ENCODE measurements at regions of chr19 and their contacts with region 1.

Region 1: GRCh38 chr19:36489118-36489919 is at the start of gene ZNF566:
- DNase-seq: peak; percentile 94
- ATAC-seq: peak; percentile 99
- H3K4me3 ChIP-seq: peak within 1 kb of the TSS; percentile 77 to 84
- H3K27ac ChIP-seq: peak within 1 kb of the TSS in 1 of 2 donors; percentile 67
- H3K4me1 ChIP-seq: no peaks in the 10 kb centered on the region
- H3K27me3 ChIP-seq: no peaks in the 10 kb centered on the region
- total RNA-seq, gene ZNF566: 13.6 to 16.5 TPM

Region 2: DNA sequence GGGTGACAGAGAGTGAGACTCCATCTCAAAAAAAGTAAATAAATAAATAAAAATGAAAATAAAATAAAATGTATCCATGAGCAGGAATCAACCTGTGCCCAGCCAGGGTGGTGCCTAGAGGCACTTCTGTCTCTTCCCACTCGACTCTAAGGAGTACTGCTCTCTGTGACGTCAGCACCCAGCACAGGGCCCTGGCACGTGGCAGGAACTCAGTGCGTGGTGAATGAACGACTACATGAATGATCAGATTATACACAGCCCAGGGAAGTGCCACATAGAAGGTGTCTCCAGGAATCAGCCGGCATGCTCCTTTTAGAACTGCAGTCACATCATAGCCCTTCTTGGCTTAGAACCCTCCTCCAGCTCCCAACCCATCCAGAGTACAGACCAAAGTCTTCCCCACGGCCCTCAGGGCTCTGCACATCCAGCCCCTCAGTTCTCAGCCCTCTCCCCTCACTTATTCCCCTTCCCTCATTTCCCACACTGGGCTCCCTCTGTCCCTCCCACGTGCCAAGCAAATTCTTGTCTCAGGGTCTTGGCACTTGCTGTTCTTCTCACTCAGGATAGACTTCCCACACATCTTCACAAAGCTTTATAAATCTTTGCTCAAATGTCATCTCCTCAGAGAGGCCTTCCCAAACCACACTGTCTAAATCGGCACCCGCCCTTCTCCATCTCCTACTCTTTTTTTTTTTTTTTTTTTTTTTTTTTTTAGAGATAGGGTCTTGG is 460.8 kb before region 1 on chr19:
- intact Hi-C with region 1: no loop called
- DNase-seq: no peak
- ATAC-seq: no peak
- H3K4me3 ChIP-seq: no peak overlapping the region
- H3K27ac ChIP-seq: no peak overlapping the region
- H3K4me1 ChIP-seq: no peaks in the 10 kb centered on the region
- H3K27me3 ChIP-seq: no peaks in the 10 kb centered on the region

Region 3: DNA sequence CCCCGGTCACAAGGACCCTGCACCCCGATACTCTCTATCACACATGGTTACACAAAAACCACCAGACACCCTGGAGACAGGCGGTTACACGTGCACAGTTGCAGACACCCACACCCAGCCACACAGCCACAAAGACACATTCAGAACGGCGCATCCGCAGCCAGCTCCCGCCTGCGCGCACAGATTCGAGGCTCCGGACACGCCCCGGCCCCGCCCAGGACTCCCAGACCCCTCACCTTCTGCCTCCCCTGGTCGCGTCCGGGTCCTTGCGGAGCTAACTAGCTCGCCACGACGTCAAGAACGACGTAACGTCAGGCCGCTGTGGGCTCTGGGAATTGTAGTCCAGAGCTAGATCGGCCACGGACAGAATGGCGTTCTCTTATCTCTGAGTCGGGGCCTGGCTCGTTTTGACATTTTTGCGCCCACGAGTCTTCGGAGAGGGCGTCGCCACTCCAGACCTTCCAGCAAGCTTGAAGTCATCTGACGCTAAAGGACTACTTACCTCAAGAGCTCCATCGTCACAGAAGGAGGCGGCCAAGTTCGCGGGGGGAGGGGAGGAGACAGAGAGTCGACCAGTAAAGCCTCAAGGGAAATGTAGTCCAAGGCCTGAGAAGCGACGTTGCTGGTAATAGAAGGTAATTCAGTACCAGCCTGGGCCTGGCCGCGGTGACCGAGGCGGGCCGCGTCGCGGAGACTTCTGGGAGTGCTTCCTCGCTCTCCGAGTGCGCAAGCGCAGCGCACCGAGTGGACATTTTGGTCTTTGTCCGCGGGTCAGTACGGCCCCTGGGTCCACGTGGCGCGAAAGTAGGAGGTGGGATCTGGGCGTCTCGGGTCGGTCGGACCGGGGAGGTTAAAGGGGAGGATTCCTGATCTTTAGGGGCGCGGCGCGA is 274.7 kb before region 1 on chr19 and contains the starts of genes ZNF146 and ZNF565:
- intact Hi-C with region 1: loop called in 1 of 2 experiments (anchors 10 kb)
- DNase-seq: peak; percentile 99
- ATAC-seq: peak; percentile 99
- H3K4me3 ChIP-seq: peak within 1 kb of the TSS; percentile 74 to 97
- H3K27ac ChIP-seq: peak within 1 kb of the TSS in 1 of 2 donors; percentile 37
- H3K4me1 ChIP-seq: no peaks in the 10 kb centered on the region
- H3K27me3 ChIP-seq: no peaks in the 10 kb centered on the region
- total RNA-seq, gene ZNF146: 44.3 to 44.8 TPM
- total RNA-seq, gene ZNF565: 7.4 to 8.0 TPM

Region 4: DNA sequence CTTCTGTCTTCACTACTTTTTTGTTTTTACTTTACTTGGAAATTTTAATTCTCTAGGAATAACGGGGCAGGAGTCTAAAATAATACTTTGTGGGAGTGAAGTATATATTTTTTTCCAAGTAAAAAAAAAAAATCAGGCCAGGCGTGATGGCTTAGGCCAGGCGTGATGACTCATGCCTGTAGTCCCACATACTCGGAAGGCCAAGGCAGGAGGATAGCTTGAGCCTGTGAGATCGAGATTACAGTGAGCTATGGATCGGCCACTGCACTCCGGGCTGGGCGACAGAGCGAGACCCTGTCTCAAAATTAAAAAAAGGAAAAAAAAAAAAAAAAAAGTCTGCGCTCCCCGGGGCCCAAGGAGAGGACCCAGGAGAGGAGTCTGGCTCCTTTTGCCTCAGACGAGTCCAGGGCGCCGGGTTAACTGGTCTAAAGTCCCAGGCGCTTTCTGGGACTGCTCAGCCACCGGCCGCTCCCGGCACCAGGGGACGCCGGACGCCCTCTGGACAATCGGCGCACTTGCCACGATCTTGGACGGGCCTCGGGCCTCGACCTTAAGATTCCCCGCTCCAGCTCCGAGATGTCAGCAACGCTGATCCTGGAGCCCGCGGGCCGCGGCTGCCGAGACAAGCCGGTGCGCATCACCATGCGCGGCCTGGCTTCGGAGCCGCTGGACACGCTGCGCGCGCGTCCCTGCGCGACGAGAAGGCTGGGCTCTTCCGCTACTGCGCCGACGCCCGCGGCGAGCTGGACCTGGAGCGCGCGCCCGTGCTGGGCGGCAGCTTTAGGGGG is 68.2 kb before region 1 on chr19:
- intact Hi-C with region 1: loop called in 1 of 2 experiments (anchors 5 kb)
- DNase-seq: peak; percentile 51 to 75
- ATAC-seq: peak; percentile 57
- H3K4me3 ChIP-seq: peak overlapping the region; percentile 19 to 31
- H3K27ac ChIP-seq: no peak overlapping the region
- H3K4me1 ChIP-seq: no peaks in the 10 kb centered on the region
- H3K27me3 ChIP-seq: no peaks in the 10 kb centered on the region

Region 5: GRCh38 chr19:36449059-36449670 is 40.2 kb before region 1 on chr19:
- intact Hi-C with region 1: no loop called
- DNase-seq: no peak
- ATAC-seq: no peak
- H3K4me3 ChIP-seq: no peak overlapping the region
- H3K27ac ChIP-seq: no peak overlapping the region
- H3K4me1 ChIP-seq: no peaks in the 10 kb centered on the region
- H3K27me3 ChIP-seq: no peaks in the 10 kb centered on the region